ENCODE measurements at regions of chr9 and their contacts with region 1.

Region 1: DNA sequence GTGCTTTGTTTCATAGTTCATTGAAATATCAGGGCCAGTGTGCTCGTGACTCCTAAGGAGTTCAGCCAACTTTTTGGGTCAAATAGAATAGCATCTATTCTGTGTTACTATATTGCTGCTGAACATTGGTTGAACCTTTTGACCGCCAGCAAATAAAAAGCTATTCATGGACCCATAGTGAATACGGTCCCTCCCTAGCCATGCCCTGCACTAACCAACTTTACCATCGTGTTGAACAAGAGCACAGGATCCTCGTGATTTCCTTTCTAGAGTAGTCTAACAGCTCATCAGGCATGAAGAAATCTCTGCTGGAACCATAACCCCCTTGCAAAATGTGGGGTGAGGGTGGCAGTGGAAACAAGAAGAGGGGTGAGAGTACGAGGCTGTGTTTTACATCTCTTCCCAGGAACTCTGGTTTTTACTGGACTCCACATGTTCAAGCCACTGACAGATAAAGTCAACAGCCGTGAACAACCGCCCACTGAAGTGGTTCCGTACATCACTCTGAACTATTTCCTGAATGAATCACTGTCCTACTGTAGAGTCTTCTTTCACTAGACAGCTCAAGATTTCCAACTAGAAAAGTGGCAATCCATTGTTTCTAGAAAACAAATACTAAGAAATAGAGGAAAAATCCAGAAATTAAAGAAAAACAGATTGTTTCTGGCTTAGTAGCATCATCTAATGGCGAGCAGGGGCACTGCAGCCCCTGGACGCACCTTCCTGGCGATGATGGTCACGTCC is 70.1 kb upstream of the SPATA31E1 start:
- DNase-seq: peak; percentile 54
- H3K4me3 ChIP-seq: no peak overlapping the region
- H3K27ac ChIP-seq: no peak overlapping the region
- H3K4me1 ChIP-seq: peaks cover 6% of the 10 kb centered on the region
- H3K27me3 ChIP-seq: no peaks in the 10 kb centered on the region
- CTCF ChIP-seq: peak; percentile 96

Region 2: GRCh38 chr9:87678650-87679515 is 133.7 kb before region 1 on chr9:
- CTCF ChIA-PET with region 1: interaction called, 3 read pairs
- POLR2A ChIA-PET with region 1: no interaction called
- intact Hi-C with region 1: loop called (anchors 2 kb)
- DNase-seq: peak; percentile 84
- H3K4me3 ChIP-seq: no peak overlapping the region
- H3K27ac ChIP-seq: peak overlapping the region; percentile 19
- H3K4me1 ChIP-seq: peaks cover 7% of the 10 kb centered on the region
- H3K27me3 ChIP-seq: no peaks in the 10 kb centered on the region
- CTCF ChIP-seq: peak; percentile 84

Measured in A673 (cell line).